ENCODE measurements at regions of chr7 and their contacts with region 1.

Region 1: GRCh38 chr7:32018845-32019578 is 51.2 kb downstream of the PDE1C start:
- DNase-seq: no peak
- ATAC-seq: no peak
- H3K4me3 ChIP-seq: no peak overlapping the region
- H3K27ac ChIP-seq: no peak overlapping the region
- H3K4me1 ChIP-seq: no peaks in the 10 kb centered on the region
- H3K27me3 ChIP-seq: no peaks in the 10 kb centered on the region
- CTCF ChIP-seq: no peak

Region 2: DNA sequence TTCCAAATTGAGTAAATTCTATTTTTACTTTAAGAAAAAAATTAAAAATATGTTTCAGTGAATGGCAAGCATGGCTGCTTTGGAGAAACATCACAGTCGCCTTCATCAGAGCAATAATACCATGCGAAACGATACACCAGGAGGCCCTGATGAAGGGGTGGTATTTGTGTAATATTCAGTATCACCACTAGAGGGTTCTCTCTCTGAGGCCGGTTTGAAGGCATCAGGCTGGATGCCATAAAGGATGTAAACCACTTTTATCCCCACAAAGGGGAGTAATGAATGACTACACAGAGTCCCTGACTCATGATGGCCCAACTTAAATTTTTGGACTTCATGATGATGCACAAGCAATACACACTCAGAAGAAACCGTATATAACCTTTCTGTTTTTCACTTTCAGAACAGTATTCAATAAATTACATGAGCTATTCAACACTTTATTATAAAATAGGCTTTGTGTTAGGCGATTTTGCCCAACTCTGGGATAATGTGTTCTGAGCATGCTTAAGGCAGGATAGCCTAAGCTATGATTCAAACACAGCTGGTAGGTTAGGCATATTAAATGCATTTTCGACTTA is 236.5 kb before region 1 on chr7:
- CTCF ChIA-PET with region 1: interaction called, 10 read pairs
- POLR2A ChIA-PET with region 1: no interaction called
- in situ Hi-C with region 1: no loop called
- intact Hi-C with region 1: no loop called
- DNase-seq: peak; percentile 38
- ATAC-seq: peak; percentile 91
- H3K4me3 ChIP-seq: no peak overlapping the region
- H3K27ac ChIP-seq: no peak overlapping the region
- H3K4me1 ChIP-seq: no peaks in the 10 kb centered on the region
- H3K27me3 ChIP-seq: no peaks in the 10 kb centered on the region
- CTCF ChIP-seq: peak; percentile 89

Region 3: GRCh38 chr7:32062150-32062549 is 43.1 kb after region 1 on chr7:
- CTCF ChIA-PET with region 1: no interaction called
- POLR2A ChIA-PET with region 1: no interaction called
- in situ Hi-C with region 1: no loop called
- intact Hi-C with region 1: no loop called
- DNase-seq: no peak
- ATAC-seq: no peak
- H3K4me3 ChIP-seq: no peak overlapping the region
- H3K27ac ChIP-seq: no peak overlapping the region
- H3K4me1 ChIP-seq: no peaks in the 10 kb centered on the region
- H3K27me3 ChIP-seq: no peaks in the 10 kb centered on the region
- CTCF ChIP-seq: peak; percentile 52